ENCODE measurements at regions of chr22 and their contacts with region 1.

Region 1: DNA sequence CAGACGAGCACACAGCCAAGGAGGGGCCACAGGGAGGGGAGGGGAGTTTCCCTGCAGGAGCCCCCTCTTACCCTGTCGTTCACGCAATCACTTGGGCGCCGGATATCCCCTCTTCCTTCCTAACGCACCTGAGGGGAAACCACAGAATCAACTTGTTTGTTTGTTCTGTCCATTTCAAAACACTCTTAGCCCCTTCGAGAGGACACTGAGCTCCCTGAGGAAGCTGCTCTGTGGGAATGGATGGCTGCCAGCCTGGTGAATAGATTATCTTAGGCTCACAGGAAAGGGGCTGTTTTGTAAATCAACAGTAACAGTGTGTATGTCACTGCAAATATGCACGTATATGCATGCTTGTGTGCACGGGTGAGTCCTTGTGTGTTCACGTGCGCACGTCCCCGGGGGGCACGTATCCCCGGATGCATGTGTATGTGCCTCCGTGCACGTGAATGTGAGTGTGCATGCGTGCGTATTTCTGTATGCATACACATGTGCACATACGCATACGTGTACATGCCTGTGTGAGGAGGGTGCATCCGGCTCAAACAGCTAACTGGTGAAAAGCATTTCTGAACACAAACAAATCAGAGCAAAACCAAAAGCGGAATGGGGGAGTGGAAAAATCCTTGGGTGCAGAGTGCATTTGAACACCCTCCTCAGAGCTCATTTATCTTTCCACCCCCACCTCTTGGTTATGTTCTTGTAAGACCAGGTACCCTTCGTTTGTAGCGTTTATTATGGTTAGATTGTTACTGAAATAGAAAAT is 7.2 kb downstream of the ARSA start:
- DNase-seq: peak; percentile 80 to 95 (median 90)
- H3K4me3 ChIP-seq: peak overlapping the region; percentile 70
- H3K4me3 Mint-ChIP-seq: peak overlapping the region; percentile 87 to 92 (median 90)
- H3K27ac ChIP-seq: peak overlapping the region; percentile 76
- H3K27ac Mint-ChIP-seq: peak overlapping the region; percentile 90 to 99 (median 98)
- H3K4me1 ChIP-seq: peaks cover 35% of the 10 kb centered on the region
- H3K4me1 Mint-ChIP-seq: peaks cover 31 to 41% (median 31%) of the 10 kb centered on the region in 3 donors
- H3K27me3 ChIP-seq: no peaks in the 10 kb centered on the region
- H3K27me3 Mint-ChIP-seq: peaks cover 0 to 2% of the 10 kb centered on the region in 2 donors

Region 2: DNA sequence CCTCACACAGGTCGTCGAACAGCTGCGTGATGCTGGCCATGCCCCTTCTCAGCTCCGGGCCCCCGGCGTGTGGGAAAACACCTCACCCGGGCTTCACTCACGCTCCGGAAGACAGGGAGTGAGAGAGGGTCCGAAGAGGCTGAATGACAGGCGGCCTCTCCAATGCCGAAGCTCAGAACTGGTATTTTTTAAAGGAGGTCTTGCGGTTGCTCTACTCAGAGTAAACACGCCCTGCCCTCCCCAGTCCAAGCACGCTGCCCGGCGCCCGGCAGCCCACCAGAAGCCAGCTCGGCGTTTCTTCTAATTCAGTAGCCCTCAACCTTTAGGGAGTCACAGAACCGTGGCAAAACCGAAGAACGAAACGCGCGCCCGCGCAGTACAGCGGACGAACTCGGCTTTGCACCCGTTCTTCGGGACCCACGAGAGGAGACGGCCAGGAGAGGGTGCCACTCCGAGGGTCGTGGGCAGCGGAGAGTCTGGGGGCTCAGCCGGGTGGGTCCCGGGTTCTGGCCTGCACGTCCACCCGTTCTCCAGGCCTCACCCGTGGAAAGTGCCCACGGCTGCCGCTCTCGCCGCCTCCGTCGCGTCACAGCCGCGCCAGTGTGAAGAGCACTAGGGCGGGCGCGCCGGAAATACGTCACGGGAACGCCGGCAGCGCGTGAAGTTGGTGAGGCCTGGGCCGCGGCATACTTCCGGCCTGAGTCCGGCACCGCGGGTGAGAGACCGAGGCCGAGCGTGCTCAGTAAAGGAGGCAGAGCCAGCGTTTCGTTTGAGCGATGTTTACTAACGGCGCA is 376.2 kb before region 1 on chr22 and contains the start of gene TUBGCP6:
- CTCF ChIA-PET with region 1: interaction called, 10 read pairs
- POLR2A ChIA-PET with region 1: no interaction called
- DNase-seq: peak; percentile 89 to 92 (median 90)
- H3K4me3 ChIP-seq: peak within 1 kb of the TSS; percentile 77
- H3K4me3 Mint-ChIP-seq: peak within 1 kb of the TSS; percentile 84 to 100 (median 98)
- H3K27ac ChIP-seq: peak within 1 kb of the TSS; percentile 99
- H3K27ac Mint-ChIP-seq: peak within 1 kb of the TSS; percentile 94 to 100 (median 98)
- H3K4me1 ChIP-seq: peaks cover 54% of the 10 kb centered on the region
- H3K4me1 Mint-ChIP-seq: peaks cover 34 to 66% (median 41%) of the 10 kb centered on the region in 3 donors
- H3K27me3 ChIP-seq: no peaks in the 10 kb centered on the region
- H3K27me3 Mint-ChIP-seq: peaks cover 0 to 1% of the 10 kb centered on the region in 2 donors
- total RNA-seq, gene TUBGCP6: 51.4 to 52.2 TPM

Region 3: DNA sequence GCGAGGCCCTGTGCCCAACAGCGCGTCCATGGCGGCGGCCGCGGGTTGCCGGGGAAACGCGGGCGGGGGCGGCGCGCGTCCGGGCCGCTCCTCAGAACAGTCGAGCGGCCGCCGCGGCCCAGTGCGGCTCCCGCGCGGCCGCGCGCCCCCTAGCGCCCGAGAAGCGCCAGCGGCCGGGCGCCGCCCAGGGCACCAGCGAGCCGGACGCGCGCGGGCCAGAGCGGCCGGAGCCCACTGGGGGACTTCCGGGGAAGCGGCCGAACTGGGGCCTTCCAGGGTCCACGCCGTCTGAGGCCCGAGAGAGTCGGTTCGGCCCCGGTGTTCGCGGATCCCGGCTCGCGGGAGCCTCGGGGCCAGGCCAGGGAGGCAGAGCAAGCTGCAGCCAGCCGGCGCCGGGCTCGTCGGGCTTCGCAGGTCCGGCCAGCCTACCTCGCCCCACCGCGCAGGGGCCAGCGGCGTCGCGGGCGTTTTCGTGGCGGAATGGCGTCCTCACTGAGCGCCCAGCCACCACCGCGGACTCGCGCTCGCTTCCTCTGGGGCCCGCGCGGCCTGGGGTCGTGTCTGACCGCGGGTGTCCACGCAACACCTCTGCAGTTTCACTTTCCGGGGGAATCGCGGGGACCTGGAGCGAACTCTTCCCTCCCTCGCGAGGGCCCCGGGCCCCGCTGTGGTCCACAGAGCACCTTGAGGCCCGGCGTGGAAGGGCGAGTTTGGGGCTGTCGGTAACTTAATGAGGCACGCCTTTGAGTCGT is 293.6 kb before region 1 on chr22 and contains the start of gene DENND6B:
- CTCF ChIA-PET with region 1: interaction called, 10 read pairs
- POLR2A ChIA-PET with region 1: no interaction called
- DNase-seq: peak; percentile 58 to 73 (median 64)
- H3K4me3 ChIP-seq: peak within 1 kb of the TSS; percentile 53
- H3K4me3 Mint-ChIP-seq: peak within 1 kb of the TSS; percentile 78 to 91 (median 84)
- H3K27ac ChIP-seq: peak within 1 kb of the TSS; percentile 61
- H3K27ac Mint-ChIP-seq: peak within 1 kb of the TSS; percentile 37 to 95 (median 70)
- H3K4me1 ChIP-seq: peaks cover 7% of the 10 kb centered on the region
- H3K4me1 Mint-ChIP-seq: peaks cover 4 to 13% (median 13%) of the 10 kb centered on the region in 3 donors
- H3K27me3 ChIP-seq: no peaks in the 10 kb centered on the region
- H3K27me3 Mint-ChIP-seq: peaks cover 3 to 6% of the 10 kb centered on the region in 2 donors
- total RNA-seq, gene DENND6B: 3.9 to 4.3 TPM

Region 4: GRCh38 chr22:50498322-50498890 is 122.4 kb before region 1 on chr22:
- CTCF ChIA-PET with region 1: interaction called, 15 read pairs
- POLR2A ChIA-PET with region 1: no interaction called
- DNase-seq: peak; percentile 35 to 81 (median 64)
- H3K4me3 ChIP-seq: no peak overlapping the region
- H3K4me3 Mint-ChIP-seq: no peak overlapping the region
- H3K27ac ChIP-seq: no peak overlapping the region
- H3K27ac Mint-ChIP-seq: peak overlapping the region in 1 of 8 donors; percentile 56
- H3K4me1 ChIP-seq: peaks cover 9% of the 10 kb centered on the region
- H3K4me1 Mint-ChIP-seq: peaks cover 0 to 4% (median 3%) of the 10 kb centered on the region in 3 donors
- H3K27me3 ChIP-seq: no peaks in the 10 kb centered on the region
- H3K27me3 Mint-ChIP-seq: no peaks in the 10 kb centered on the region

Region 5: DNA sequence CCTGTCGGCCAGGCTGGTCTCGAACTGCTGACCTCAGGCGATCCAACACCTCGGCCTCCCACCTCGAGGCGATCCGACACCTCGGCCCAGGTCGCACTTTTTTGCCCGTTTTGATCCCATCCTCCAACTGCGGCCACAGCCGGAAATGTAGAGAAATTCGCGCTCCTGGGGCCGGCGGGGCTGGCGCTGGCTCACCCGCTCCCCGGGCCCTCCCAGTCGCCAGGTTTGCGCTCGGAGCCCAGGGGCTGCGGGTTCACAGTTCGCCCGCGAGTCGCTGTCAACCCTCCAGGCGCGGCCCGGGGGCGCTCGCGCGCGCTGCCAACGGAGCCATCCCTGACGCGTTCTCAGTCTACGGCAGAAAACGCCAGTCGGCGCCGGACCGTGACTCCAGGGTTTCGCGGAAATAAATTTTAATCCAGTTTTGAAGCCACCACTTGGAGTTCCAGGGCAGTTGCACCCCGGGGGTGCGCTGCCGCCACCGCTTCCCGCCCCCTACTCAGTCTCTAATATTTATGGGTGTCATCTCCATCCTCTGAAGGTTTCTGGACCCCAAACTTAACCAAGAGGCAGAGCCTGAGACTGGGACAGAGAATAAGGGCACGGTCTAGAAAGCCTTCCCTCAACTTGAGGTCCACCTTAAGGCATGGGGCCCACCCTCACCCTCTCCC is 76.6 kb before region 1 on chr22:
- CTCF ChIA-PET with region 1: interaction called, 18 read pairs
- POLR2A ChIA-PET with region 1: interaction called, 16 read pairs
- DNase-seq: peak; percentile 72 to 87 (median 78)
- H3K4me3 ChIP-seq: peak overlapping the region; percentile 77
- H3K4me3 Mint-ChIP-seq: peak overlapping the region; percentile 60 to 85 (median 71)
- H3K27ac ChIP-seq: peak overlapping the region; percentile 33
- H3K27ac Mint-ChIP-seq: peak overlapping the region; percentile 74 to 99 (median 91)
- H3K4me1 ChIP-seq: peaks cover 41% of the 10 kb centered on the region
- H3K4me1 Mint-ChIP-seq: peaks cover 39 to 55% (median 44%) of the 10 kb centered on the region in 3 donors
- H3K27me3 ChIP-seq: no peaks in the 10 kb centered on the region
- H3K27me3 Mint-ChIP-seq: no peaks in the 10 kb centered on the region

Region 6: DNA sequence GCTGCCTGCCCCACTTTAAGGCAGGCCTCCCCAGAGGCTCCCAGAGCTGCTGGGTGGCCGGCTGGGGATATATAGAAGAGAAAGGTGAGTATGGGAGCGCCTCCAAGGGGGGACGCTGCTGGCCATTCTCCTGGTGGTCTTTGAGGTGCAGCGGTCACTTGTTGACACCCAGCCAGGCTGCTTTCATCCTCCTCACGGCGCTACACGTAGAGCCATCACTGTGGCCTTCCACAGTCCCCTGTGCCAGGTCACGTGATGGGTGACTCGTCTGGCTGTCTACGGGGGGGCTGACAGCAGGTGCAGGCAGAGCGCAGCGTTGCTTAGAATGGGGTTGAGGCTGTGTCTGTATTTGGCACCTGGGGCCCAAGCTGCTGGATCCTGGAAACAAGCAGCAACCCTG is 119.1 kb after region 1 on chr22:
- CTCF ChIA-PET with region 1: no interaction called
- POLR2A ChIA-PET with region 1: no interaction called
- DNase-seq: no peak
- H3K4me3 ChIP-seq: no peak overlapping the region
- H3K4me3 Mint-ChIP-seq: no peak overlapping the region
- H3K27ac ChIP-seq: no peak overlapping the region
- H3K27ac Mint-ChIP-seq: no peak overlapping the region
- H3K4me1 ChIP-seq: no peaks in the 10 kb centered on the region
- H3K4me1 Mint-ChIP-seq: no peaks in the 10 kb centered on the region
- H3K27me3 ChIP-seq: no peaks in the 10 kb centered on the region
- H3K27me3 Mint-ChIP-seq: peaks cover 4 to 19% of the 10 kb centered on the region in 2 donors